ENCODE measurements at regions of chr2 and their contacts with region 1.

Region 1: GRCh38 chr2:135689679-135690078 is 52.0 kb upstream of the UBXN4 start:
- DNase-seq: peak in 1 of 9 experiments; percentile 28
- ATAC-seq: peak; percentile 36
- H3K4me3 ChIP-seq: peak overlapping the region in 1 of 2 experiments; percentile 46
- H3K4me3 Mint-ChIP-seq: peak overlapping the region; percentile 70
- H3K27ac ChIP-seq: peak overlapping the region; percentile 49 to 51
- H3K27ac Mint-ChIP-seq: peak overlapping the region; percentile 95
- H3K4me1 ChIP-seq: peaks cover 22% of the 10 kb centered on the region
- H3K4me1 Mint-ChIP-seq: peaks cover 41% of the 10 kb centered on the region
- H3K27me3 ChIP-seq: no peaks in the 10 kb centered on the region
- H3K27me3 Mint-ChIP-seq: no peaks in the 10 kb centered on the region
- CTCF ChIP-seq: no peak

Region 2: GRCh38 chr2:135657806-135658582 is 31.7 kb before region 1 on chr2:
- CTCF ChIA-PET with region 1: no interaction called
- POLR2A ChIA-PET with region 1: no interaction called
- intact Hi-C with region 1: loop called (anchors 1 to 2 kb)
- DNase-seq: peak; percentile 35 to 86 (median 73)
- ATAC-seq: peak; percentile 92
- H3K4me3 ChIP-seq: peak overlapping the region; percentile 21 to 52
- H3K4me3 Mint-ChIP-seq: peak overlapping the region; percentile 85
- H3K27ac ChIP-seq: peak overlapping the region; percentile 41 to 80
- H3K27ac Mint-ChIP-seq: peak overlapping the region; percentile 99
- H3K4me1 ChIP-seq: peaks cover 16% of the 10 kb centered on the region
- H3K4me1 Mint-ChIP-seq: peaks cover 19% of the 10 kb centered on the region
- H3K27me3 ChIP-seq: no peaks in the 10 kb centered on the region
- H3K27me3 Mint-ChIP-seq: no peaks in the 10 kb centered on the region
- CTCF ChIP-seq: no peak

Region 3: DNA sequence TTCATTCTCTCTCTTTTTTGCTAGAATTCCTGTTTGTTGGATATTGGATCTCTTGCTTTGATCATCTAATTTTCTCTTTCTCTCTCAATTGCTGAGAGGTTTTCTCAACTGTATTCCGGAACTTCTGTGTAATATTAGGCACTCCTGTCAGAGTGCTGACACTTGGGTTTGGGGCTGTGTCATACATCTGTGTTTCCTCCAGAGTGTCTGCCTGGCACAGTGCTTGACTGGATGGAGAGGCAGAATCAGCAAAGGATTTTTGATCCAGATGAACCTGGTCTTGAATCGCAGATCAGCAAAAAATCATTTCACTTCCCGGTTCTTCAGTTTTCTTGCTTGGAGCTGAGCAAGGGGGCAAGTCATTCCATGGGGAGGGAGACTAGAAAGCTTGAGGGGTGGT is 515.9 kb after region 1 on chr2:
- CTCF ChIA-PET with region 1: no interaction called
- POLR2A ChIA-PET with region 1: no interaction called
- intact Hi-C with region 1: no loop called
- DNase-seq: no peak
- ATAC-seq: no peak
- H3K4me3 ChIP-seq: no peak overlapping the region
- H3K4me3 Mint-ChIP-seq: no peak overlapping the region
- H3K27ac ChIP-seq: no peak overlapping the region
- H3K27ac Mint-ChIP-seq: no peak overlapping the region
- H3K4me1 ChIP-seq: peaks cover 8% of the 10 kb centered on the region
- H3K4me1 Mint-ChIP-seq: peaks cover 15% of the 10 kb centered on the region
- H3K27me3 ChIP-seq: no peaks in the 10 kb centered on the region
- H3K27me3 Mint-ChIP-seq: no peaks in the 10 kb centered on the region
- CTCF ChIP-seq: no peak

Measured in CD8-positive, alpha-beta T cell (primary cell).